AG04450 (cell line): ENCODE measurements at regions of chr4 and their contacts with region 1.

Region 1: GRCh38 chr4:103046416-103047290 is 27.1 kb upstream of the SLC9B1 start:
- DNase-seq: no peak
- H3K4me3 ChIP-seq: no peak overlapping the region
- H3K27ac ChIP-seq: no peak overlapping the region
- H3K27me3 ChIP-seq: no peaks in the 10 kb centered on the region
- CTCF ChIP-seq: peak; percentile 79

Region 2: GRCh38 chr4:103032574-103032973 is 14.1 kb before region 1 on chr4:
- CTCF ChIA-PET with region 1: interaction called, 12 read pairs
- POLR2A ChIA-PET with region 1: no interaction called
- DNase-seq: no peak
- H3K4me3 ChIP-seq: no peak overlapping the region
- H3K27ac ChIP-seq: no peak overlapping the region
- H3K27me3 ChIP-seq: no peaks in the 10 kb centered on the region
- CTCF ChIP-seq: peak; percentile 72